Sigmoid colon (tissue), 7 donors: ENCODE measurements at regions of chr2 and their contacts with region 1.

Region 1: DNA sequence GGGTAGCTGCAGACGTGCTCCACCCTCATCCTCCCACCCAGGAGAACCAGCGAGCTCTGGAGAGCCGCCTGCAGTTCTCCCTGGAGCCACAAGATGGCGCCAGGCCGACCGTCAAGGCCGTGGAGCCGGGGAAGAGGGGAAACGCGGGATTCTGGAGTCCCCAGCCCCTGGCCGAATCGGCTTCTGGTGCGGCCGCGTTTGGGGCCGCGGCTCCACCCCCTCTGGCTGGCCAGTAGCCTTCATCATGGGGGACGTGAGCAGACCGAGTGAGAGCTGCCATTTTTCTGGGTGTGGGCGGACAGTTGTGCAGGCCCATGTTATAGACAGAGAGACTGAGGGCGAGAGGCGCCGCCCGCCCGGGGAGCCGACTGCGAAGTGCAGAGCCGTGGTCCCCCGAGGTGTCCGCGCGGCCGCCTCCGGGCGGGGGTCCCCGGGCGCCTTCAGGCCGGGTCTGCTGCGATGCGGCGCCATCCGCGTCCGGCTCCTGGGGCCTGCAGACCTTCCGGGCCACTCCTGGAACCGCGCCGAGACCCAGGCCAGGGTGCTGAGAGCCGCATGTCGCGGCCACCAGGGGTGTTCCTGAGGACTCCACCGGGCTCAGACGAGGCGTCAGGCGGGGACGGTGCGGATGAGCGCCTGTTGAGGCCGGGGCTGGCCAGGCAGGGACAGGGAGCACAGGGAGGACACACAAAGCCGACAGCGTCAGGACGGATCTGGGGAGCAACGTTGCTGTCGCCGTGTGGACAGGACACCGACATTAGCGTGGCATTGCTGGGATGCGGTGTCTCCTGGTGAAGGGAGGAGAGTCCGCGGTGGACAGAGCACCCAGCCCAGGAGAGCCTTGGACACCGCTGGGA is 418.2 kb upstream of the HS6ST1 start:
- DNase-seq: peak; percentile 86
- H3K4me3 ChIP-seq: peak overlapping the region; percentile 12 to 48 (median 34)
- H3K27ac ChIP-seq: no peak overlapping the region
- H3K4me1 ChIP-seq: peaks cover 0 to 22% (median 18%) of the 10 kb centered on the region in 4 donors
- H3K27me3 ChIP-seq: no peaks in the 10 kb centered on the region
- CTCF ChIP-seq: peak; percentile 66 to 99 (median 86)
- EP300 ChIP-seq: no peak
- POLR2A ChIP-seq: no peak

Region 2: GRCh38 chr2:128879161-128879560 is 142.2 kb after region 1 on chr2:
- intact Hi-C with region 1: no loop called
- DNase-seq: no peak
- H3K4me3 ChIP-seq: no peak overlapping the region
- H3K27ac ChIP-seq: no peak overlapping the region
- H3K4me1 ChIP-seq: no peaks in the 10 kb centered on the region
- H3K27me3 ChIP-seq: no peaks in the 10 kb centered on the region
- CTCF ChIP-seq: no peak
- EP300 ChIP-seq: no peak
- POLR2A ChIP-seq: no peak

Region 3: DNA sequence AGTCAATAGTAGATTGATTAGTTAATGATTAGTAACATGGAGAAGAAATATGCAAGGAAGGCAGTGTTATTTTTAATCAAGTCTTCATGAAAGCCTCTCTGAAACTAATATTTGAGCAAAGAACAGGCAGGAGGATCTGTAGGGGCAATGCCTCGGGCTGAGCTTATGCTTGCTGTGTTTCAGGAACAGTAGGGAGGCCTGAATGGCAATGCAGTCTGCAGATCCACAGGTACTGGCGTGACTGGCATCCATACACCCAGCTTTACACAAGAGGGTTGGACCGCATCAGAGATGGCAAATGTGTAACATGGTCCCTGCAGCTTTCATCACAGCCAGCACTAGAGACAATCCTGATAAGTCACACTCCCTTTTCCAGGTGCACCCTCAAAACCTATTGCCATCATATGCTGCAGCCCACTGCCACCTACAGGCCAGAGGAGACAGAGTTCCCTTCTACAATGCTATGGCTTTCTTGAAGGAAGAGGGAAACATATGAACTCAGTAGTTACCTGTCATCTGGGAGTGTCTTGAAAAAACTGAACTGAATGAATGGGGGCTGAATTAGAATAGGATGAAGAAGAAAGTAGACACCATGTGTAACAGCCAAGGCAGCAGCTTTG is 660.2 kb after region 1 on chr2:
- intact Hi-C with region 1: loop called (anchors 2 kb)
- DNase-seq: no peak
- H3K4me3 ChIP-seq: no peak overlapping the region
- H3K27ac ChIP-seq: no peak overlapping the region
- H3K4me1 ChIP-seq: no peaks in the 10 kb centered on the region
- H3K27me3 ChIP-seq: no peaks in the 10 kb centered on the region
- CTCF ChIP-seq: peak; percentile 15 to 56 (median 40)
- EP300 ChIP-seq: no peak
- POLR2A ChIP-seq: no peak

Region 4: DNA sequence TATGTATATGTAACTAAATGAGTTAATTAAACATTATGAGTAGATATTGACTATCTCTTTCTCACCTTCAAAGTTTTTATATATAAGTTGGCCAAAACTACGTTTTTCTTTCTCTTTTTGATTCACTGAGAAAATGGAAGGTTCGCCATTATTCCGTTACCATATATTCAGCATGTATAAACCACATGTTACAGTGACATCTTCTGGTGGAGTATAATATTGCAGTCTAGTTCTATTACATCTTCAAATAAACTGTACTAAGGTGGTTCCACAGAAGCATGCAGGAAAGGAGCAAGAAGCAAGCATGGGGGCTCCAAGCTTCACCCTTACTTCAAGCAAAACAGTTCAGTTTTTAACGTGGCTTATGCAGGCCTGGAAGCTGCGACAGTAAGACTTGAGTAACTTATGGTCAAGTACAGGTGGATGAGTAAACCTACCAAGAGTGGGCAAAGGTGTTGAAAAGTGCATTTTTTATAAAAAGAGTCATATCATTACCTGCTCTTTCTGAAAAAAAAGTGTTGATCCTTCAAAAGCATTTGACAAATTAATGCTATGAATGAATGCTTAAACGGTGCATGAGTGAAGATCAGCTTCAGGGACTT is 1112.7 kb after region 1 on chr2:
- intact Hi-C with region 1: loop called (anchors 2 kb)
- DNase-seq: no peak
- H3K4me3 ChIP-seq: no peak overlapping the region
- H3K27ac ChIP-seq: no peak overlapping the region
- H3K4me1 ChIP-seq: no peaks in the 10 kb centered on the region
- H3K27me3 ChIP-seq: no peaks in the 10 kb centered on the region
- CTCF ChIP-seq: peak; percentile 21 to 76 (median 64)
- EP300 ChIP-seq: no peak
- POLR2A ChIP-seq: no peak